ENCODE measurements at regions of chr6 and their contacts with region 1.

Region 1: GRCh38 chr6:119313937-119314884 is 35.4 kb downstream of the MAN1A1 start:
- DNase-seq: peak; percentile 42
- ATAC-seq: peak; percentile 78
- H3K4me3 ChIP-seq: no peak overlapping the region; the same call in 1 of the 2 replicates
- H3K27ac ChIP-seq: peak overlapping the region; percentile 73
- H3K4me1 ChIP-seq: peaks cover 28% of the 10 kb centered on the region
- H3K27me3 ChIP-seq: no peaks in the 10 kb centered on the region
- CTCF ChIP-seq: no peak
- EP300 ChIP-seq: peak in 1 of 2 experiments; percentile 86; a peak in 1 of 4 replicates
- POLR2A ChIP-seq: peak; percentile 46; the same call in 1 of the 2 replicates
- RAD21 ChIP-seq: no peak

Region 2: GRCh38 chr6:119066517-119066916 is 247.7 kb before region 1 on chr6:
- CTCF ChIA-PET with region 1: no interaction called
- POLR2A ChIA-PET with region 1: no interaction called
- RAD21 ChIA-PET with region 1: no interaction called
- SMC1A ChIA-PET with region 1: no interaction called
- in situ Hi-C with region 1: no loop called
- intact Hi-C with region 1: no loop called
- DNase-seq: no peak
- ATAC-seq: no peak
- H3K4me3 ChIP-seq: no peak overlapping the region
- H3K27ac ChIP-seq: no peak overlapping the region
- H3K4me1 ChIP-seq: no peaks in the 10 kb centered on the region
- H3K27me3 ChIP-seq: no peaks in the 10 kb centered on the region
- CTCF ChIP-seq: no peak
- EP300 ChIP-seq: no peak
- POLR2A ChIP-seq: no peak
- RAD21 ChIP-seq: no peak

Region 3: DNA sequence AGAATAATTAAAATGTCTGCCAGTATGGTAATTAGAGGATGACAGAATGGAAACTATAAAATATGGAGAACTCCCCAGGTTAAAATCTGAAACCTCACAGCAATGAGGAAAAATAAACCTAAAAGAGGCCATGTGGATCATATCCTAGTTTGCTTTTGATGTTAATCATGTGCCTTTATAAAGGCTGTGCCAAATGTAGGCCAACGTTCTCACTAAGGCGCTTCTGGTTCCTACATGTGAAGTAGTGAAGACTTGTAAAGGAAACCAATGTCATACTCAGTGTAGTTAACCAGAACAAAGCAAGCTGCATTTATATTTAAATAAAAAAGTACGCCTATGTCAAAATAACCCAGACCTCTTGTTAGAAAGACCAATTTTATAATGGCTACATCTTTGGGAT is 122.0 kb before region 1 on chr6:
- CTCF ChIA-PET with region 1: no interaction called
- POLR2A ChIA-PET with region 1: no interaction called
- RAD21 ChIA-PET with region 1: interaction called, 4 read pairs
- SMC1A ChIA-PET with region 1: interaction called, 24 read pairs
- in situ Hi-C with region 1: no loop called
- intact Hi-C with region 1: no loop called
- DNase-seq: no peak
- ATAC-seq: no peak
- H3K4me3 ChIP-seq: no peak overlapping the region
- H3K27ac ChIP-seq: no peak overlapping the region
- H3K4me1 ChIP-seq: no peaks in the 10 kb centered on the region
- H3K27me3 ChIP-seq: no peaks in the 10 kb centered on the region
- CTCF ChIP-seq: no peak
- EP300 ChIP-seq: no peak
- POLR2A ChIP-seq: no peak
- RAD21 ChIP-seq: no peak

Region 4: DNA sequence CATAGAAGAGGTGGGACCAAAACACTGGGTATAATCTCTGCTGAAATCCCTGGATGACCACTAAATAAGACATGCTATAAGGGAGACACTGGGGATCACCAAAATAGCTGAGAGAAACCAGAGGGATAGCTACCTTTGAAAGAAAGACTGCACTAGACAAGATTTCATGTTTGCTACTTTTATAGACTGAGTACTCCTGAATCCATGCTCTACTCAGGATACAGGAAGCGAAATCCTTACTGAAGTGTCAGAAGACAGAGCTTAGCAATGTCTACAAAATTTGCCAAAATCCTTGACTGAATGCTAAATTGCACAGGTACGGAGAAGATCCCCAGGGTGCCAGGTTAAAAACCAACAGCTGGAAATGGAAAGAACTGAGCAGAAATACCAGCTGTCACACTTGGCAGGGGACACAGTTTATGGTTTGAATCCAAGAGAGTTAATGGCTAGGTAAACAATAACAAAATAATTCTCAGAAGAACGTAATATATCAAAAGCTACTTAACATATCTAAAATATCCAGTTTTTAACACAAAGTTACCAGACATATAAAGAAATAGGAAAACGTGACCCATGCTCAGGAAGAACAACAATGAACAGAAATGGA is 90.0 kb before region 1 on chr6:
- CTCF ChIA-PET with region 1: interaction called, 4 read pairs
- POLR2A ChIA-PET with region 1: interaction called, 4 read pairs
- RAD21 ChIA-PET with region 1: interaction called, 10 read pairs
- SMC1A ChIA-PET with region 1: interaction called, 9 read pairs
- in situ Hi-C with region 1: no loop called
- intact Hi-C with region 1: loop called (anchors 5 kb)
- DNase-seq: no peak
- ATAC-seq: no peak
- H3K4me3 ChIP-seq: no peak overlapping the region
- H3K27ac ChIP-seq: no peak overlapping the region
- H3K4me1 ChIP-seq: no peaks in the 10 kb centered on the region
- H3K27me3 ChIP-seq: no peaks in the 10 kb centered on the region
- CTCF ChIP-seq: no peak
- EP300 ChIP-seq: no peak
- POLR2A ChIP-seq: no peak
- RAD21 ChIP-seq: no peak

Region 5: DNA sequence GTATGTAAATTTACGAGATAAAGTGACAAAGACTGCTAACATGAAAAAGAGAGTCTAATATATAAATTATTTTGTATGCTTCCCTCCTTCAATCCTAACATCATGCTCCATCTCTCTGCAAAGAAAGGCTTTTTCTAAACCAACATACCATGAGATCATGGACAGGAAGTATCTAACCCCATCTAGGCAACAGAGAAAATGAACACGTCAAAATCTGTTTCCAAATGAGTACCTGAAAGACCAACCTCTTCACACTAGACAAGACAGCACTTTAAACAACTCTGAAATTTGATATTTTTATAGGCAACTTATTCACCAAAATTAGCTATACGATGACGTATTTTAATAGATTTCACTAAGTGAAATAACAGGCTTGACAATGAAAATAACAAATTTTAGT is 19.2 kb before region 1 on chr6:
- CTCF ChIA-PET with region 1: interaction called, 5 read pairs
- POLR2A ChIA-PET with region 1: interaction called, 8 read pairs
- RAD21 ChIA-PET with region 1: interaction called, 14 read pairs
- SMC1A ChIA-PET with region 1: interaction called, 13 read pairs
- in situ Hi-C with region 1: no loop called
- intact Hi-C with region 1: no loop called
- DNase-seq: no peak
- ATAC-seq: peak; percentile 96
- H3K4me3 ChIP-seq: no peak overlapping the region
- H3K27ac ChIP-seq: no peak overlapping the region
- H3K4me1 ChIP-seq: no peaks in the 10 kb centered on the region
- H3K27me3 ChIP-seq: no peaks in the 10 kb centered on the region
- CTCF ChIP-seq: no peak
- EP300 ChIP-seq: peak; percentile 29 to 48; a peak in 2 of 4 replicates
- POLR2A ChIP-seq: no peak
- RAD21 ChIP-seq: no peak

Region 6: GRCh38 chr6:119333707-119334295 is 19.6 kb after region 1 on chr6:
- CTCF ChIA-PET with region 1: interaction called, 62 read pairs
- POLR2A ChIA-PET with region 1: interaction called, 114 read pairs
- RAD21 ChIA-PET with region 1: interaction called, 414 read pairs
- SMC1A ChIA-PET with region 1: interaction called, 359 read pairs
- in situ Hi-C with region 1: no loop called
- intact Hi-C with region 1: no loop called
- DNase-seq: no peak
- ATAC-seq: peak; percentile 61
- H3K4me3 ChIP-seq: no peak overlapping the region
- H3K27ac ChIP-seq: no peak overlapping the region
- H3K4me1 ChIP-seq: no peaks in the 10 kb centered on the region
- H3K27me3 ChIP-seq: no peaks in the 10 kb centered on the region
- CTCF ChIP-seq: peak; percentile 45 to 69 (median 57); a peak in 5 of 6 replicates
- EP300 ChIP-seq: no peak
- POLR2A ChIP-seq: no peak
- RAD21 ChIP-seq: peak; percentile 88

Region 7: GRCh38 chr6:119463081-119463626 is 148.9 kb after region 1 on chr6:
- CTCF ChIA-PET with region 1: no interaction called
- POLR2A ChIA-PET with region 1: no interaction called
- RAD21 ChIA-PET with region 1: interaction called, 10 read pairs
- SMC1A ChIA-PET with region 1: interaction called, 4 read pairs
- in situ Hi-C with region 1: no loop called
- intact Hi-C with region 1: no loop called
- DNase-seq: peak; percentile 75
- ATAC-seq: peak; percentile 89
- H3K4me3 ChIP-seq: 0 out of 2 replicates have a peak overlapping the region, but pooled peaks have one; percentile 11
- H3K27ac ChIP-seq: peak overlapping the region; percentile 77
- H3K4me1 ChIP-seq: peaks cover 44% of the 10 kb centered on the region
- H3K27me3 ChIP-seq: no peaks in the 10 kb centered on the region
- CTCF ChIP-seq: no peak
- EP300 ChIP-seq: peak; percentile 64 to 81
- POLR2A ChIP-seq: no peak
- RAD21 ChIP-seq: no peak; the same call in 1 of the 2 replicates

Measured in GM12878 (cell line).